ENCODE measurements at regions of chr17 and their contacts with region 1.

Region 1: DNA sequence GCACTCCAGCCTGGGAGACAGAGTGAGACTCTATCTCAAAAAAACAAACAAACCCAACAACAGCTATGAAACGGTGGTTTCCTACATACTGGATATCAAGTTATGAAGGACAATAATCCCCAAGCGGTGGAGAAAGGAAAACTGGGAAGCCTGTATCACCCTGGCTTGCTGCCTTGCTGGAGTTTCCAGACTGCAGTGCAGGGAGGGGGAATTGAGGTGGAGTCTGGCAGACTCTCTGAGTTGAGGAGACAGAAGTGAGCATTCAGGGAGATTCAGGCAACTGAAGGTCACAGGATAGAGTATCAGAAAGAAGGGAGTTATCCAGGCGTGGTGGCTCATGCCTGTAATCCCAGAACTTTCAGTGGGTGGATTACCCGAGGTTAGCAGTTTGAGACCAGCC is 11.9 kb downstream of the QRICH2 start:
- DNase-seq: no peak

Region 2: GRCh38 chr17:76014184-76014924 is 281.8 kb before region 1 on chr17:
- intact Hi-C with region 1: loop called (anchors 10 kb)
- DNase-seq: peak; percentile 26 to 85 (median 68)

Region 3: GRCh38 chr17:76196675-76197074 is 99.5 kb before region 1 on chr17:
- intact Hi-C with region 1: no loop called
- DNase-seq: peak in 10 of 42 donors; percentile 3 to 55 (median 24)

Measured in head of caudate nucleus (tissue), 42 donors.